HEK293T (cell line): ENCODE measurements at regions of chr19 and their contacts with region 1.

Region 1: GRCh38 chr19:38374429-38375176 is at the start of gene PSMD8:
- DNase-seq: peak; percentile 98

Region 2: GRCh38 chr19:38264486-38265212 is 110.0 kb before region 1 on chr19 and contains the start of gene SPINT2:
- CTCF ChIA-PET with region 1: no interaction called
- POLR2A ChIA-PET with region 1: interaction called, 10 read pairs
- DNase-seq: peak; percentile 65

Region 3: GRCh38 chr19:38335949-38336637 is 38.5 kb before region 1 on chr19:
- CTCF ChIA-PET with region 1: interaction called, 4 read pairs
- POLR2A ChIA-PET with region 1: interaction called, 40 read pairs
- DNase-seq: peak; percentile 86

Region 4: DNA sequence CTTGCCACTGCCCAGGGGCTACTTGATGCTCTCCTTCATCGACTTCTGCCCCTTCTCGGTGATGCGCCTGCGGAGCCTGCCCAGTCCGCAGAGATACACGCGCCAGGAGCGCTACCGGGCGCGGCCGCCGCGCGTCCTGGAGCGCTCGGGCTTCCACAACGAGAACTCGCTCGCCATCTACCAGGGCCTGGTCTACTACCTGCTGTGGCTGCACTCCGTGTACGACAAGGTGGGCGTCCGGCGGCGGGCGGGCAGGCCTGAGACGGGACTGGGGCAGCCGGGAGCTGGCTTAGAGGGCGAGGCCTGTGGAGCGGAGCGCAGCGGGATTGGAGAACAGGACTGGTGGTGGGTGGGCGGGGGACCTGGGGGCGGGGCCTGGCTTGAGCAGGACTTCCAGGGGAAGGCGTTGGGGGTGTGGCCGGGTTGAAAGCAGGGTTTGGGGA is 12.9 kb before region 1 on chr19:
- CTCF ChIA-PET with region 1: interaction called, 3 read pairs
- POLR2A ChIA-PET with region 1: interaction called, 31 read pairs
- DNase-seq: peak; percentile 90

Region 5: GRCh38 chr19:38387550-38388348 is 13.1 kb after region 1 on chr19 and contains the start of gene GGN:
- CTCF ChIA-PET with region 1: interaction called, 3 read pairs
- POLR2A ChIA-PET with region 1: interaction called, 18 read pairs
- DNase-seq: peak; percentile 94